Breast epithelium (tissue), 4 donors: ENCODE measurements at regions of chr6 and their contacts with region 1.

Region 1: DNA sequence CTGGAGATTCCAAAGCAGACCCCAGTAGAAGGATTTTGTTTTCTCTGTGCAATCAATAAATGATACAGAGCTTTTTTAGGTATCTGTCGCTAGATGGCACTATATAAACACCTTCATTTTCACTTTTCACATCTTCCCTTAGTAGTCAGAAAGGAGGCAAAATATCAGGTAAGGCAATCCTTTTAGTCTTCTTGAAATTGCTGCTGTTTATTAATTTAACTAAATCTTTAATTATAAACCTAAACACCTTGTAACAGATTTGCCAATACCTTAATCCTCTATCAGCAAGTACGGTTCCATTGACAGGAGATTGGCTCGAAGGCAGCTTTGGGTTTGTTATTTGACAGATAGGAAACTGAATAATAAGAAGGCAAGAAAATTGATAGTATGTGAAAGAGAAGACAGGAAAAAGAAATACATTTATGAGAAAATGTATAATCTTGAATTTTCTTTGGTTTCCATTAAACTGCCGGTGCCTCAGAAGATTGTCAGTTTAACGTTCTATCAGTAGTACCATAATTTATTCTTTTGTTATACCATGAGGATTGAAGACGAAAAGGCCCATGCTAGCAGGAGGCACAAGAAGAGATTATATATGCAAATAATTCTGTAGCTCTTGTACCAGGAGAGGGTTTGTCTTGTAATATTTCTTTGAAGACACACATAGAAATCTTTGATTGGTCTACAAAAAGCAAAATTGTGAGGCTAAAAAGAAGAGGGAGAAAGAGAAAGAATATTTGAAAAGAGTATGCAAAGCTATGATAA is 23.5 kb upstream of the IBTK start:
- DNase-seq: no peak
- H3K4me3 ChIP-seq: no peak overlapping the region
- H3K27ac ChIP-seq: no peak overlapping the region
- H3K4me1 ChIP-seq: no peaks in the 10 kb centered on the region
- H3K27me3 ChIP-seq: no peaks in the 10 kb centered on the region
- CTCF ChIP-seq: peak; percentile 22 to 62 (median 52)
- POLR2A ChIP-seq: no peak

Region 2: DNA sequence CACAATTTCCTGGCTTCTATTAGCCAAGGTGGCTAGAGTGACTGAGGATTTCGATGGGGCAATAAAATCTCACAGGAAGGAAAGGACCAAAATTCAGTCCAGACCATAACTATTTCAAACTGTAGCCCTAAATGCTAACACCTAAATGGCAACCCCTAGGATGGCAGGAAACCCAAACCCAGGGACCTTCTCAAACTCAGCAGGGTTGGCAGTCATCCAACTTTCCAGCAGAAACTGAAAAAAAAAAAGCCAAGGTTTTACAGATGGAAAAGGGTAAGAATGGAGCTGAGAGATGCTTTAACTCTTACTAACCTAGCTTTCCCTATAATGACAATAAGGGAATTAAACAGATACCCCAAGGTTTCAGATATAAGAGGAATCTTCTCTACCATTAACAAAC is 34.0 kb before region 1 on chr6:
- intact Hi-C with region 1: no loop called
- DNase-seq: no peak
- H3K4me3 ChIP-seq: no peak overlapping the region
- H3K27ac ChIP-seq: no peak overlapping the region
- H3K4me1 ChIP-seq: no peaks in the 10 kb centered on the region
- H3K27me3 ChIP-seq: no peaks in the 10 kb centered on the region
- CTCF ChIP-seq: no peak
- POLR2A ChIP-seq: no peak

Region 3: GRCh38 chr6:82283771-82284410 is 12.8 kb after region 1 on chr6:
- intact Hi-C with region 1: no loop called
- DNase-seq: no peak
- H3K4me3 ChIP-seq: no peak overlapping the region
- H3K27ac ChIP-seq: no peak overlapping the region
- H3K4me1 ChIP-seq: no peaks in the 10 kb centered on the region
- H3K27me3 ChIP-seq: no peaks in the 10 kb centered on the region
- CTCF ChIP-seq: no peak
- POLR2A ChIP-seq: no peak

Region 4: DNA sequence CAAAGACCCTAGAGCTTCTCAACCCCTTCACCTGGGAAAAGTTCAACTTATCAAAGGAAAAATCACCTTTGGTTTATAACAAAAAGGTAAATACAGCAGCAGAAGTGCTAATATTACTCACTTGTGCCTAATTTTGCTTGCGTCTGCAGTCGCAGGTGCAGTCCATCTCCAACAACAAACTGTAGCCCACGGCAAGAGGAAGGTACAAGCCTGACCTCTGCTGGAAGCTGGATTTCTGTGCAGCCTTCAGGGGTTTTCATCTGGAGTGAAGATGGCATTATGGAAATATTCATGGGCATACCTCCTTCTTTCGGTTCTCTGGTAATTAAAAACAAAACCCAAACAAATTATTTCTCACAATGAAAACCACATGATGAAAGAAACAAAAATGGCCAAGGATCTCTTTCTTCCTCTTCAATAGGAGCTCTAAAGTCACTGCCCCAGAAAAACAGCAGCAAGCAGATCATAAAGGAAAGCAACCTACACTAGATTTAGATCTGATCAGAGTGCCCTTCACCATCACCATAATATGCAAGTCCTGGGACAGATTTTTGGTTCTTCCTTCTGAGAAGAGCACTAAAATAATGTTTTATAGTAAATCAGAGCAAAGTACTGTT is 786.8 kb after region 1 on chr6:
- intact Hi-C with region 1: loop called (anchors 10 kb)
- DNase-seq: no peak
- H3K4me3 ChIP-seq: no peak overlapping the region
- H3K27ac ChIP-seq: no peak overlapping the region
- H3K4me1 ChIP-seq: no peaks in the 10 kb centered on the region
- H3K27me3 ChIP-seq: no peaks in the 10 kb centered on the region
- CTCF ChIP-seq: peak in 2 of 3 donors; percentile 42 to 52
- POLR2A ChIP-seq: no peak